CD4-positive, alpha-beta memory T cell (primary cell): ENCODE measurements at regions of chr11 and their contacts with region 1.

Region 1: DNA sequence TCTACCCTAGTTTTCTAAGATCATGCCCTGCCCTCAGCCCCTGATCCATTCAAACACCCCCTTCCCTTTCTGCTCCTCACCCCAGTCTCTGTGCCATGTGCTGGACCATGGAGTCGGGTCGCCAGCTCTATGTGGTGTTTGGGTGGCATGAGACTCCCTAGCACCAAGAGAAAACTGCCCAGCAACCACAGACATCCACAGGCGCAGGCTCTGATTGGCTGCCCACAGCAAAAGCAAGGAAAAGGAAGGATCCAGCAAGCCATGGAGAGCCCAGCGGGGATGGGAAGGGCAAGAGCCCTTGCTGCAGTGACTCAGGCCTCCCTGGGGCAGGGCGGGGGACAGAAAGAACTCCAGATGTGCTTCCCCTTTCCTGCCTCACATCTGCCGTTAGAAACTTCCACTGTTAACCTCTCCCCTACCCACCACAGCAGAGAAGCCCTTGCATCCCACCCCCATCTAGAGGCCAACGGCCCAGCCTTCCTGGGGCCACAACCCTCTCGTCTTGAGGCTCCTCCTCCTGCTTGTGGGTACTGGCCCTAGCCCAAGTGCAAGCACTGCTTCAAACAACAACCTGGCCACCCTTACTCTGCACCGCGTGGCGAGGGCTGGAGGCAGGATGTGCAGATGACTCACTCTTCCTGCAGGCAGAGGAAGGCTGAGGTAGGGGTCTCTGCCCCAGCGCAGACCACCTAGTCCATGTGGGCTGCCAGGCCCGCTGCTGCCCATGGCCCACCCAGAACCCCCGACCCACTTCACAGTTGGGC is 9.7 kb upstream of the AHNAK start:
- DNase-seq: peak; percentile 85 to 97 (median 87)
- H3K4me3 ChIP-seq: peak overlapping the region; percentile 37 to 75
- H3K4me3 Mint-ChIP-seq: peak overlapping the region; percentile 82 to 91 (median 90)
- H3K27ac ChIP-seq: peak overlapping the region; percentile 95
- H3K27ac Mint-ChIP-seq: peak overlapping the region; percentile 98 to 100 (median 100)
- H3K4me1 ChIP-seq: peaks cover 98% of the 10 kb centered on the region
- H3K4me1 Mint-ChIP-seq: peaks cover 73 to 97% (median 85%) of the 10 kb centered on the region in 4 donors
- H3K27me3 ChIP-seq: no peaks in the 10 kb centered on the region
- H3K27me3 Mint-ChIP-seq: peaks cover 0 to 2% of the 10 kb centered on the region in 2 donors

Region 2: DNA sequence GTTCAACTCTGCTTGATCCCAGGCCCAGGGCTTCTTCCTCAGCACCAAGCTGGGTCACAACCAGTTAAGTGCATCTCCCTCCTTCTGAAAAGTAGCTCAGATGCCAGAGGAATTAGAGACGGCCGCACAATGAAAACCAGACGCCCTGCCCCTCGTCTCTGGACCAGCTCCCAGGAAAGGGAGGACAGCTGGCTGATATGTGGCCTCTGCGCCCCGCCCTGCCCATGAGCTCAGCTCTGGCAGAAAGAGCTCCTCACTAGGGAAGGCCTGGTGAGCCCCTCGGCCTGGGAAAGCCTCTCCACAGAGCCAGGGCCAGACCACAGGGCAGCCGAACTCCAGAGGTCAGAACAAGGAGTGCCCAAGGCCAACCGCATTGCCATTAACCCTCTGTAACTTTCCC is 155.5 kb before region 1 on chr11:
- CTCF ChIA-PET with region 1: interaction called, 91 read pairs
- POLR2A ChIA-PET with region 1: interaction called, 10 read pairs
- intact Hi-C with region 1: no loop called
- DNase-seq: no peak
- H3K4me3 ChIP-seq: no peak overlapping the region
- H3K4me3 Mint-ChIP-seq: peak overlapping the region in 2 of 8 donors; percentile 10 to 23
- H3K27ac ChIP-seq: no peak overlapping the region
- H3K27ac Mint-ChIP-seq: peak overlapping the region in 1 of 7 donors; percentile 37
- H3K4me1 ChIP-seq: peaks cover 44% of the 10 kb centered on the region
- H3K4me1 Mint-ChIP-seq: peaks cover 22 to 33% (median 27%) of the 10 kb centered on the region in 4 donors
- H3K27me3 ChIP-seq: no peaks in the 10 kb centered on the region
- H3K27me3 Mint-ChIP-seq: peaks cover 0 to 1% of the 10 kb centered on the region in 2 donors

Region 3: DNA sequence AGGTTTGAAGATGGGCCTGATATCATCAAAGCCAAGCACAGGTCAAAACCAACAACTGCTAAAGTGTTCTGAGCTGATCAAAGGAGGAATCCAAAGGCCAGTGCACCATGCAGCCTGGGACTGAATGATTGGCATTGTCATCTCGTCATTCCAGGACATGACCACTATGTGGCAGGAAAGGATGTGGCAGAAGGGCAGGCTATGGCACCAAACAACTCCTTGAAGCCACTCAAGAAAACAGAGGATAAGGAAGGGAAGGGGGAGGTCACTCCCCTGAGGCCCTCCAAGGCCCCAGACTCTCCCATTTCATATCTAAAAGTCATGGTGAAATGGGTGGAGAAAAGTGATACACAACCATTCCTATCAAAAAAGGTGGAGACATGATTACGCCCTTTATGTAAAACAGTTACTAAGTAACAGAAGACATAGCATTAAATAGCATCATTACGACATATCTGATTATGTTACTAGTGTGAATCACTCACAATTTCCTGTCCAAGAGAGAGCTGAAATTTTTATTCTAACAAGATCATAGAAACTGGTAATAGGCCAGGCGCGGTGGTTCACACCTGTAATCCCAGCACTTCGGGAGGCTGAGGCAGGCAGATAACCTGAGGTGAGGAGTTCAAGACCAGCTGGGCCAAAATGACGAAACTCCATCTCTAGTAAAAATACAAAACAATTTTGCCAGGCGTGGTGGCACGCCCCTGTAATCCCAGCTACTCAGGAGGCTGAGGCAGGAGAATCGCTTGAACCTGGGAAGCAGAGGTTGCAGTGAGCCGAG is 59.0 kb before region 1 on chr11:
- CTCF ChIA-PET with region 1: interaction called, 25 read pairs
- POLR2A ChIA-PET with region 1: interaction called, 4 read pairs
- intact Hi-C with region 1: loop called (anchors 1 kb)
- DNase-seq: peak in 1 of 5 donors; percentile 16
- H3K4me3 ChIP-seq: no peak overlapping the region
- H3K4me3 Mint-ChIP-seq: no peak overlapping the region
- H3K27ac ChIP-seq: no peak overlapping the region
- H3K27ac Mint-ChIP-seq: peak overlapping the region in 2 of 7 donors; percentile 43 to 54
- H3K4me1 ChIP-seq: no peaks in the 10 kb centered on the region
- H3K4me1 Mint-ChIP-seq: peaks cover 2 to 15% (median 7%) of the 10 kb centered on the region in 4 donors
- H3K27me3 ChIP-seq: no peaks in the 10 kb centered on the region
- H3K27me3 Mint-ChIP-seq: no peaks in the 10 kb centered on the region

Region 4: DNA sequence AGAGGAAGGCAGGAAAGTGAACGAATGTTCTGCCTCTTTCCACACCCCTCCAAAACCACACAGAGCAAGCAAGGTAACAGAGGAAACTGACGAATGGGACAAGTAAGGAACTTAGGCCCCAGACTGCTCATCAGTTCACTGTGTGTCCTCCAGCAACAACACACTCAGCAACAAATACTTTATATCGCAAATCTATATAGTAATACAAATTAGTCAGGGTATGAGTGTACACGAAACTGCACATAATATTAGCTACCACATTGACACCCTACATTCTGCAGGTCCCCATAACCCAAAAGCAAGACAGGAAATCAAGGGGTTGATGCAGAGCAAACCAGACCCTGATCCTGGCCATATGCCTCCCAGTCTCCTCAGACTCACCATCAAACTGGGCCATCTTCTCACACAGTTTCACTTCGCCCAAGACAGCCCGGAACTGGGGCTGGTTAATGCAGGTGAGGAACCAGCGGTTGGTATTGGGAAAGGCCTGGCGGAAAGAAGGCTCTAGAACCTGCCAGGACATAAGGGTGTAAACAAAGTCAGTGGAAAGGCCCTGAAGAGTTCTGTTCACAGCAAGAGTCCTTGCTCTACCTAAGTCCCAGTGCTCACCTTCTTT is 10.8 kb after region 1 on chr11:
- CTCF ChIA-PET with region 1: interaction called, 24 read pairs
- POLR2A ChIA-PET with region 1: interaction called, 120 read pairs
- intact Hi-C with region 1: no loop called
- DNase-seq: no peak
- H3K4me3 ChIP-seq: no peak overlapping the region
- H3K4me3 Mint-ChIP-seq: peak overlapping the region in 2 of 8 donors; percentile 28 to 73
- H3K27ac ChIP-seq: peak overlapping the region; percentile 15
- H3K27ac Mint-ChIP-seq: peak overlapping the region; percentile 51 to 85 (median 81)
- H3K4me1 ChIP-seq: peaks cover 38% of the 10 kb centered on the region
- H3K4me1 Mint-ChIP-seq: peaks cover 25 to 51% (median 38%) of the 10 kb centered on the region in 4 donors
- H3K27me3 ChIP-seq: no peaks in the 10 kb centered on the region
- H3K27me3 Mint-ChIP-seq: no peaks in the 10 kb centered on the region

Region 5: DNA sequence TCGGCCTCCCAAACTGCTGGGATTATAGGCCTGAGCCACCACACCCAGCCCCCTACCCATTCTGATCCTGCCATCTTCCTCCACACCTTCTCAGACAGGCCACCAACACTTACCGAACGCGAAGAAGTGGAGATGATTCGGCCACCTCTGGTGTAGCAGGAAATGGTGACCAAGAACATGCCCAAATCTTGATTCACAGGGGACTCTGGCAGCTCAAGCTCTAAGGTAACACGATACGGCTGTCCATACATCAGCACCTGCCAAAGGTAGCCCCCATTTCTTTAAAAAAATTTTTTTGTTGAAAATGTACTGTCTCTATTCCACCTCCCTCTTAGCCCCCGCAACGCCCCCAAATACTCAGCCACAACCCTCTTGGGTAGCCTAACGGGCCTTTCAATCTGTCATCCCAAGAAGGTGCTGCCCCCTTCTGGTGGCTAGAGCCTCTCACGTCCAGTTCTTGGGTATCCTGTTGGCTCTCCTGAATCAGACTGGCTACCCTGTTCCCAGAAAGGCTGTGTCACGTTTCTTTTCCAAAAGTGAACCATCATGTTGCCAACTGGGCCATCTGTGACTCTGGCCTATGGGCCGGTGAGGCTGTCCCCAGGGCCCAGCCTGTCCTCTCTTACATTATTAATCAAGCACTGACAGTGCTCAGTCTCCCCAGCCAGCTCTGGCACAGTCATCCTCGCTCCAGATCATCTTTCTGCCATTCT is 138.3 kb after region 1 on chr11:
- CTCF ChIA-PET with region 1: interaction called, 12 read pairs
- POLR2A ChIA-PET with region 1: interaction called, 3 read pairs
- intact Hi-C with region 1: no loop called
- DNase-seq: peak; percentile 73 to 80 (median 74)
- H3K4me3 ChIP-seq: no peak overlapping the region
- H3K4me3 Mint-ChIP-seq: no peak overlapping the region
- H3K27ac ChIP-seq: no peak overlapping the region
- H3K27ac Mint-ChIP-seq: peak overlapping the region in 4 of 7 donors; percentile 7 to 77 (median 56)
- H3K4me1 ChIP-seq: no peaks in the 10 kb centered on the region
- H3K4me1 Mint-ChIP-seq: peaks cover 5 to 7% (median 6%) of the 10 kb centered on the region in 4 donors
- H3K27me3 ChIP-seq: no peaks in the 10 kb centered on the region
- H3K27me3 Mint-ChIP-seq: no peaks in the 10 kb centered on the region